ENCODE measurements at regions of chr17 and their contacts with region 1.

Region 1: DNA sequence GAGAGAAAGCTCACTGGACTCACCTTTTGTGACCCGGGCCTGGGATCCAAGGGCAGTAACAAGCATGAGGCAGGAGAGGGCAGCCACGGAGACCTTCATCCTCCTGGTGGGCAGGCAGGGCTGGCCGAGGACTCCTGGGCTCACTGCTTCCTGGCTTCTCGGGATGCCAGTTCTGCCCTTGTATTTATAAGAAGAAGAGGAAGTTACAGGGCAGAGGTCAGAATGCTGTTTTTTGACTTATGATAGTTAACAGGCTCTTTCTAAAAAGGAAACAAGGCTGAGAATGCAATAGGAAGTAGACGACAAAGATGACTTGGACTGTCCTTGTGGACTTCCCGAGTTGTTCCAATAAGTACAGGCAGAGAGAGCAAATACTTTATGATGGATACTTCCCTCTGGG is at the start of gene CCL23:
- DNase-seq: no peak
- H3K4me3 ChIP-seq: no peak within 1 kb of the TSS
- H3K27ac ChIP-seq: no peak within 1 kb of the TSS
- H3K4me1 ChIP-seq: no peaks in the 10 kb centered on the region
- H3K27me3 ChIP-seq: no peaks in the 10 kb centered on the region
- CTCF ChIP-seq: no peak
- POLR2A ChIP-seq: no peak
- total RNA-seq, gene CCL23: 1.3 to 2.7 (median 1.9) TPM

Region 2: GRCh38 chr17:35981908-35982330 is 35.9 kb before region 1 on chr17:
- intact Hi-C with region 1: loop called (anchors 2 kb)
- DNase-seq: no peak
- H3K4me3 ChIP-seq: no peak overlapping the region
- H3K27ac ChIP-seq: no peak overlapping the region
- H3K4me1 ChIP-seq: no peaks in the 10 kb centered on the region
- H3K27me3 ChIP-seq: no peaks in the 10 kb centered on the region
- CTCF ChIP-seq: no peak
- POLR2A ChIP-seq: no peak

Region 3: DNA sequence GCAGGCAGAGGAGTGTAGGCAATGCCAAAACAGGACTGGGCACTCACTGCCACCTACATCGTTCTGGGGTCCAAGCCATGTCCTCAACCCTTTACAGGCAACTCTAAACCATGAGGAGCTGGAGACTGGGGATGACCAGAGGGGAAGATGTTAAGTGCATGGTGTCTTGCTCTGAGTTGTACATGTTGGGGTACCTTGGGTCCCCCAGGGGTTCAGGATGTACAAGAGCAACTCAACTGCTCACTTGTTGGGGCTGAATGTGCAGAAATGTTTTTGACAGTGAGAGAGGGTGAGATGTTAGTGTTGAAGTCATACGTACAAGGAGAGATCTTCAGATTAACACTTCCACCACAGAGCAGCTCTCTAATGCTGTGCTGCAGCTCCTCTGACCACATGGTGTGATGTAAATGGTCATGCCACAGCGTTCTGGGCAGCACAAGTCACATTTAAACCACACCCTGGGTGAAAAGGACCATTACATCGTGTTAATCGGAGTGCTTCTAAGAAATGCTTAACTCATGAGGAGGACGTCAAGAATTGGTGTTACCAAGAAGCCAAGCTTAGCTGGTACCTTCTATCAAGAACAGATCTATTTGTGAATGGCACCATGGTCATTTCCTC is 48.7 kb after region 1 on chr17:
- intact Hi-C with region 1: no loop called
- DNase-seq: no peak
- H3K4me3 ChIP-seq: no peak overlapping the region
- H3K27ac ChIP-seq: no peak overlapping the region
- H3K4me1 ChIP-seq: no peaks in the 10 kb centered on the region
- H3K27me3 ChIP-seq: no peaks in the 10 kb centered on the region
- CTCF ChIP-seq: no peak
- POLR2A ChIP-seq: no peak